ENCODE measurements at regions of chr16 and their contacts with region 1.

Region 1: GRCh38 chr16:75432828-75433731 is at the start of gene CFDP1:
- DNase-seq: peak; percentile 94 to 99 (median 97)

Region 2: DNA sequence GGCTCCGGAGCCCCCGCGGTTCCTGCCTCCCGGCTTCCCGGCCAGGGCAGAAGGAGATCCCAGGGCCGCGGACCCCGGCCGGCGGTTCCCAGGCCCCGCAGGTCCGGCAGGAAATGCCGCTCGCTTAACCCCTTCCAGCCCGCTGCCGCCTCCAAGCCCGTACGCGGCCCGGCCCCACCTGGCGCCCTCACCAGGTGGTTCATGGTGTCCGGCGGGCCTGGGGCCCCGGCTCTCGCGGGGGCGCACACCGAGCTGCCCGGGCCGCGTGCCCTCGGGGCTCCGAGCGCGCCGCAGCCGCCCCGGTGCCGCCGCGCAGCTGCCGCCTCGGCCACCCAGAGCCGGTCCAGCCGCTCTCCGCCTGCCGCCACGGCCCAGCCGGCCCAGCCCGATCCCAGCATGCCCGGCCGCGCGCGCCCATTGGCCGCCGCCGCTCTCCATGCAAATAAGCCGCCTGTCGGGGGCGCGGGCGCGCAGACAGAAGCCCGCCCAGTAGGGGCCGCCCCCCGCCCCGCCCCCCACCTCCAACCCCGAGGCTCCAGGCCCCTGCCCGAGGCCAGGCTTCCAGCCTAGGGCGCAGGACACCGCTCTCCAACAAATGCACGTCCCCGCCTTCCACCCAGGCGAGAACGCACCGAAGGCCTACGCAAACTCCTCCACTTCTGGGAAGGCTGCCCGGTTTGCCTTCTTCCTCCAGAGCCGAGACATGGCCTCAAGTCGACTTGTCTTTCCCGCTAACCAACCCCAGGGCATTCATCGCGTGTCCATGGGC is 181.6 kb before region 1 on chr16 and contains the start of gene BCAR1:
- intact Hi-C with region 1: no loop called
- DNase-seq: peak; percentile 73 to 98 (median 86)

Region 3: GRCh38 chr16:75464130-75464918 is 31.2 kb after region 1 on chr16 and contains the start of gene TMEM170A:
- intact Hi-C with region 1: loop called (anchors 2 kb)
- DNase-seq: peak; percentile 97 to 100 (median 99)

Measured in posterior cingulate gyrus (tissue), 11 donors.